H1 (cell line): ENCODE measurements at regions of chr3 and their contacts with region 1.

Region 1: DNA sequence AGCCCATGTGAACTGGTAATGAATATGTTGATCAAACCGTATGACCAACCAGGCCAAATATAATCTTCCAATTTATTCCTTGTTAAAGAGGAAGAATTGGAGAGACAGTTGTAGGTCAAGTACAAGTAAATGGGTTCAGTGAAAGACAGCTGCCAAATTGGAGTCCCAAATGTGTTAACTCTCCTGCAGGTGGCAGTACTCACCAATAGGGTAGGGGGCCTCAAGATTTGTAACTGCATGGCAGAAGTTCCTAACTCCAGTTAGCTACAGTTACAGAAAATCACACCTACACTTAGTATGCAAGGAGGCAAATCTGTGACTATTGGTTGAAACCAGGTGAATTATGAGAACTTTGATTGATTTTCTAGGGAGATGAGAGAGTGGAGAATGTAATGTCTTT is 278.0 kb downstream of the ZBBX start:
- DNase-seq: peak in 1 of 2 experiments; percentile 54
- H3K4me3 ChIP-seq: no peak overlapping the region
- H3K27ac ChIP-seq: no peak overlapping the region
- H3K4me1 ChIP-seq: no peaks in the 10 kb centered on the region
- H3K27me3 ChIP-seq: no peaks in the 10 kb centered on the region
- CTCF ChIP-seq: peak in 2 of 3 experiments; percentile 71 to 73; a peak in 3 of 4 replicates
- EP300 ChIP-seq: no peak
- POLR2A ChIP-seq: no peak
- RAD21 ChIP-seq: peak; percentile 87 to 88

Region 2: GRCh38 chr3:167078070-167078622 is 23.9 kb before region 1 on chr3:
- CTCF ChIA-PET with region 1: no interaction called
- POLR2A ChIA-PET with region 1: no interaction called
- DNase-seq: no peak
- H3K4me3 ChIP-seq: no peak overlapping the region
- H3K27ac ChIP-seq: no peak overlapping the region
- H3K4me1 ChIP-seq: peaks cover 0 to 3% (median 0%) of the 10 kb centered on the region in 4 experiments; a peak in 2 of 7 replicates
- H3K27me3 ChIP-seq: no peaks in the 10 kb centered on the region
- CTCF ChIP-seq: no peak
- EP300 ChIP-seq: no peak
- POLR2A ChIP-seq: no peak
- RAD21 ChIP-seq: no peak

Region 3: DNA sequence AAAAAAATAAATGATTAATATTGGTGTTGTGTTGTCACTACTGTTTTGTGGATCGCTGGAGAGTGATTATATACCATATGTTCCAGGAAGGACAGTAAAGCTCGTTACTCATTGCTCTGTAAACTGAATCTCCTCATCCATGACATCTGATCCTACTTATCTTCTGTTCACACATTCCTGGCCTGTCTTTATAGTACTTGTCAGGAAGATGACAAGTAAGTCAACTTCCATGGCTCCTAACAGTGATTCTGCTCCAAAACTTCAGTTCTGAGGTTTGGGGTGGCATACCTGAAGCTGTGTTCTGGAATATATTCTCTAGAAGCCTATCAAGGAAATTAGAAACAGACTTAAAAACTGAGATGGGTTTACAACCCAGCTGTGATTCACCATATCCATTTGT is 10.8 kb before region 1 on chr3:
- CTCF ChIA-PET with region 1: interaction called, 13 read pairs
- POLR2A ChIA-PET with region 1: no interaction called
- DNase-seq: no peak
- H3K4me3 ChIP-seq: no peak overlapping the region
- H3K27ac ChIP-seq: no peak overlapping the region
- H3K4me1 ChIP-seq: no peaks in the 10 kb centered on the region
- H3K27me3 ChIP-seq: no peaks in the 10 kb centered on the region
- CTCF ChIP-seq: no peak
- EP300 ChIP-seq: no peak
- POLR2A ChIP-seq: no peak
- RAD21 ChIP-seq: no peak

Region 4: DNA sequence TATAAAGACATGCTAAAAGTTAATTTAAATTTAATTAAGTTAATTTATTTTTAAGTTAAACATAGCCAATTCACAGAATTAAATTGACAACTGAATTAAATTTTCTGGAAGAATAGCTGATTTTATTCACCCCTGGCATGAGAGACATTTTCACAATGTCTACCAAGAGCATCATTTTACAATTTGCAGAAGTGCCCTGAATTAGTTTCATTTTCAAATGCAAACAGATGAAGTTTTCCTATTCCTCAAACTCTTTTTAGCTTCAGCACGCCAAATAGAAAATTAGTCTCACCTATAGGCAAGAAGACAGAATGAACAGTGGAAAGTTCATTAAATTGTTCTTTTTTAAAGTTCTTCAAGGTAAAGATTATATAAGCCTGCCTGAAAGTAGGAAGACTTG is 18.8 kb after region 1 on chr3:
- CTCF ChIA-PET with region 1: interaction called, 14 read pairs
- POLR2A ChIA-PET with region 1: interaction called, 3 read pairs
- DNase-seq: no peak
- H3K4me3 ChIP-seq: no peak overlapping the region
- H3K27ac ChIP-seq: no peak overlapping the region
- H3K4me1 ChIP-seq: no peaks in the 10 kb centered on the region
- H3K27me3 ChIP-seq: no peaks in the 10 kb centered on the region
- CTCF ChIP-seq: no peak
- EP300 ChIP-seq: no peak
- POLR2A ChIP-seq: no peak
- RAD21 ChIP-seq: no peak

Region 5: DNA sequence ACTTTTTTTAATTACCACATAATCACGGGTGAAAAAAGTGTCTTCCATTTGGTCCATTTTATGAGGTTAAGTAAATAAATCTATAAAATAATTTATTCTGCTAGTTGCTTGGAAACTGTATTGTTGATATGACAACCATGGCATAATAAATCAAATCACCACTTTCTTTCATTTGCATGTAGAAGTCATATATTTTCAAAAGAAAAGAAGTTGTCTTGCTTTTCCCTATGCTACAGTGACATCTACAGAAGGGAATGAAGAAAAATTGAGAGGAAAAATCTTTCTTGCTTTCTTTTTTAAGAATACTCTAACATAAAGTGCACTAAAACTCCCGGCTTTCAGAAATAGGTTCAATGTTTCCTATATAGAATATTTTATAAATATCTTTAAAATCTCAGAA is 49.6 kb after region 1 on chr3:
- CTCF ChIA-PET with region 1: no interaction called
- POLR2A ChIA-PET with region 1: no interaction called
- DNase-seq: no peak
- H3K4me3 ChIP-seq: no peak overlapping the region
- H3K27ac ChIP-seq: no peak overlapping the region
- H3K4me1 ChIP-seq: no peaks in the 10 kb centered on the region
- H3K27me3 ChIP-seq: no peaks in the 10 kb centered on the region
- CTCF ChIP-seq: no peak
- EP300 ChIP-seq: no peak
- POLR2A ChIP-seq: no peak
- RAD21 ChIP-seq: peak in 1 of 2 experiments; percentile 29; a peak in 3 of 4 replicates

Region 6: DNA sequence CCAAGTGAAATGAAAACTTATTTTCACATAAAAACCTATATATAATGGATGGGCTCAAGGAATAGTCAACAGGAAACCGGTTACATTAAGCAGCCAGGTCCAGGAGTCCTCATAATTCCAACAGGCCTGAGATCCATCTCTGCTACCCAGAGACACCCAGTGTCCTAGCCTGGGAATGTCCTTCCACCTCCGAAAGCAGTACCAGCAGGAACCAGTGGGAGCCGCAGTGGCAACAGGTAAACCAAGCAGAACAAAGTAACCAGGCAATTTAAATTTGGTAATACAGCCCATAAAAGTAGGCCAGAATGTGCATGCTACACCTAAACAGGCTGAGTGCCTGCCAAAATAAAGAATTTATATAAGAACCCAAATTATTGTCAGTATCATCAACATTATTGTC is 82.4 kb after region 1 on chr3:
- CTCF ChIA-PET with region 1: interaction called, 12 read pairs
- POLR2A ChIA-PET with region 1: no interaction called
- DNase-seq: no peak
- H3K4me3 ChIP-seq: no peak overlapping the region
- H3K27ac ChIP-seq: no peak overlapping the region
- H3K4me1 ChIP-seq: no peaks in the 10 kb centered on the region
- H3K27me3 ChIP-seq: no peaks in the 10 kb centered on the region
- CTCF ChIP-seq: peak; percentile 62 to 85 (median 71)
- EP300 ChIP-seq: no peak
- POLR2A ChIP-seq: no peak
- RAD21 ChIP-seq: peak; percentile 60 to 72

Region 7: GRCh38 chr3:167198949-167199600 is 97.0 kb after region 1 on chr3:
- CTCF ChIA-PET with region 1: no interaction called
- POLR2A ChIA-PET with region 1: no interaction called
- DNase-seq: no peak
- H3K4me3 ChIP-seq: no peak overlapping the region
- H3K27ac ChIP-seq: no peak overlapping the region
- H3K4me1 ChIP-seq: no peaks in the 10 kb centered on the region
- H3K27me3 ChIP-seq: no peaks in the 10 kb centered on the region
- CTCF ChIP-seq: no peak
- EP300 ChIP-seq: no peak
- POLR2A ChIP-seq: no peak
- RAD21 ChIP-seq: no peak

Region 8: DNA sequence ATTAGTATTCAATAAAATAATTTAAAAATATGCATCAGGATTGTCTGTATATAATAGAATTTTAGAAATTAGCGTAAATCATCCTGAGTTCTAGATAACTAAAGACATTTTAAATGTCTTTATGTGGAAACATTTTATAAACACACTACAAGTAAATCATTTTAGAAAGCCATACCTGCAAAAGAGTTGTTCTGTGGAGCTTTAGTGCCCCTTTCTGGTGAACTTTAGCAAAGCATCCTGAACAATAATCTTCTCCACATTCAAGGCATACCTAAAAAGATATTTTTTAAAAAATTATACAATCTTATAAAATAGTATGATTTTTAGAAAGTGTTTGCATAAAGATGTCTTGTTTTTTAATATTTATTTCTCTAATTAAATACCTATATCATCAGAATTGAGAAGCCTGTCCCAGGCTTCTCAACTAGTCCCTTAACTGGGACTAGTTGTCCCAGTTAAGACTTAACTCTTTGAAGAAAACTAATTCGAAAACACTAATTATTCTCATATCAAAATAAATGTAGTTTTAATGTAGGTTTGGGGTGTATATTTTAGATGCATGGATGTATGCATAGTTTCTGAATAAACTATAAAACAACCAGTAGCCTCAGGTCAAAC is 248.3 kb after region 1 on chr3:
- CTCF ChIA-PET with region 1: interaction called, 10 read pairs
- POLR2A ChIA-PET with region 1: no interaction called
- DNase-seq: no peak
- H3K4me3 ChIP-seq: no peak overlapping the region
- H3K27ac ChIP-seq: no peak overlapping the region
- H3K4me1 ChIP-seq: no peaks in the 10 kb centered on the region
- H3K27me3 ChIP-seq: no peaks in the 10 kb centered on the region
- CTCF ChIP-seq: peak in 2 of 3 experiments; percentile 46 to 49; a peak in 2 of 4 replicates
- EP300 ChIP-seq: no peak
- POLR2A ChIP-seq: no peak
- RAD21 ChIP-seq: peak; percentile 85 to 87